Heart left ventricle (tissue), 16 donors: ENCODE measurements at regions of chr2 and their contacts with region 1.

Region 1: GRCh38 chr2:217785544-217786045 is 217.2 kb downstream of the TNS1 start:
- DNase-seq: peak; percentile 72 to 87 (median 79)
- ATAC-seq: peak; percentile 69 to 72 (median 71)
- H3K4me3 ChIP-seq: no peak overlapping the region
- H3K27ac ChIP-seq: peak overlapping the region in 1 of 12 donors; percentile 33
- H3K4me1 ChIP-seq: peaks cover 0 to 31% (median 21%) of the 10 kb centered on the region in 12 donors
- H3K27me3 ChIP-seq: no peaks in the 10 kb centered on the region
- CTCF ChIP-seq: peak; percentile 94 to 99 (median 96)
- POLR2A ChIP-seq: no peak

Region 2: GRCh38 chr2:217382794-217383193 is 402.8 kb before region 1 on chr2:
- intact Hi-C with region 1: no loop called
- DNase-seq: no peak
- ATAC-seq: peak; percentile 77 to 88 (median 84)
- H3K4me3 ChIP-seq: no peak overlapping the region
- H3K27ac ChIP-seq: peak overlapping the region in 10 of 12 donors; percentile 23 to 81 (median 65)
- H3K4me1 ChIP-seq: peaks cover 0 to 30% (median 5%) of the 10 kb centered on the region in 12 donors
- H3K27me3 ChIP-seq: no peaks in the 10 kb centered on the region
- CTCF ChIP-seq: no peak
- POLR2A ChIP-seq: no peak

Region 3: GRCh38 chr2:217835931-217836891 is 50.6 kb after region 1 on chr2:
- intact Hi-C with region 1: no loop called
- DNase-seq: peak; percentile 79 to 89 (median 88)
- ATAC-seq: peak; percentile 1 to 70 (median 48)
- H3K4me3 ChIP-seq: no peak overlapping the region
- H3K27ac ChIP-seq: peak overlapping the region; percentile 74 to 96 (median 88)
- H3K4me1 ChIP-seq: peaks cover 17 to 100% (median 91%) of the 10 kb centered on the region in 12 donors
- H3K27me3 ChIP-seq: no peaks in the 10 kb centered on the region
- CTCF ChIP-seq: no peak
- POLR2A ChIP-seq: no peak

Region 4: DNA sequence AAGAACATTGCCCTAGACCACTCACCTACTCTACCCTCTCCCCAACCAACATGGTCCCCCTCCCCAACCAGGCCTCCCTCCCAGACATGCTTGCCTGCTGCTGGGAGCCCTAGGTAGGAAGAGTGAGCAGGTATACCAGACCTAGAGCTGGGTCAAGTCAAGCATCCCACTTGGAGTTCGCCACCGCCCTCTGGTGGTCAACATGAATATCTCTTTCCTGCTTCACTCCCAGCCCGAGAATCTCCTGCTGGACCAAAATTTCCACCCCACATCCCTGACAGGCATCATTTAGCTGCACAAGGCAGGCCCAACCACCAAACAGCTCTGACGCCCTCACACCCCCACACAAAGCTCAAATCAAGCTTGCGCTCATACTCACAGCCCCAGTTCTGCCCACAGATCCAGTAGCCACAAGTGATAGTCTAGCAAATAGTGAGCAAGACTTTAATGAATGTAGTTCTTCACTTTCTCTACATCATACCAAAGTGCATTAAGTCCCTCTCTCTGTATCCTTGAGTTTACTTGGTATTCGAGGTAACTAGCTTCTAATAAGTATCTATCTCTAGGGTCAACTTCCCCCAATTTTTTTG is 101.2 kb after region 1 on chr2:
- intact Hi-C with region 1: loop called (anchors 1 to 5 kb)
- DNase-seq: peak; percentile 74 to 82 (median 79)
- ATAC-seq: peak in 3 of 4 donors; percentile 9 to 41 (median 33)
- H3K4me3 ChIP-seq: no peak overlapping the region
- H3K27ac ChIP-seq: peak overlapping the region in 9 of 12 donors; percentile 19 to 79 (median 65)
- H3K4me1 ChIP-seq: peaks cover 8 to 72% (median 52%) of the 10 kb centered on the region in 12 donors
- H3K27me3 ChIP-seq: no peaks in the 10 kb centered on the region
- CTCF ChIP-seq: peak; percentile 70 to 90 (median 79)
- POLR2A ChIP-seq: no peak

Region 5: GRCh38 chr2:217943446-217944389 is 158.1 kb after region 1 on chr2:
- intact Hi-C with region 1: loop called in 2 of 10 experiments (anchors 5 kb)
- DNase-seq: peak; percentile 91 to 94 (median 92)
- ATAC-seq: peak; percentile 87 to 90 (median 90)
- H3K4me3 ChIP-seq: peak overlapping the region; percentile 56 to 95 (median 82)
- H3K27ac ChIP-seq: peak overlapping the region; percentile 92 to 99 (median 96)
- H3K4me1 ChIP-seq: peaks cover 8 to 82% (median 65%) of the 10 kb centered on the region in 12 donors
- H3K27me3 ChIP-seq: no peaks in the 10 kb centered on the region
- CTCF ChIP-seq: peak; percentile 24 to 67 (median 52)
- POLR2A ChIP-seq: peak; percentile 64 to 96

Region 6: DNA sequence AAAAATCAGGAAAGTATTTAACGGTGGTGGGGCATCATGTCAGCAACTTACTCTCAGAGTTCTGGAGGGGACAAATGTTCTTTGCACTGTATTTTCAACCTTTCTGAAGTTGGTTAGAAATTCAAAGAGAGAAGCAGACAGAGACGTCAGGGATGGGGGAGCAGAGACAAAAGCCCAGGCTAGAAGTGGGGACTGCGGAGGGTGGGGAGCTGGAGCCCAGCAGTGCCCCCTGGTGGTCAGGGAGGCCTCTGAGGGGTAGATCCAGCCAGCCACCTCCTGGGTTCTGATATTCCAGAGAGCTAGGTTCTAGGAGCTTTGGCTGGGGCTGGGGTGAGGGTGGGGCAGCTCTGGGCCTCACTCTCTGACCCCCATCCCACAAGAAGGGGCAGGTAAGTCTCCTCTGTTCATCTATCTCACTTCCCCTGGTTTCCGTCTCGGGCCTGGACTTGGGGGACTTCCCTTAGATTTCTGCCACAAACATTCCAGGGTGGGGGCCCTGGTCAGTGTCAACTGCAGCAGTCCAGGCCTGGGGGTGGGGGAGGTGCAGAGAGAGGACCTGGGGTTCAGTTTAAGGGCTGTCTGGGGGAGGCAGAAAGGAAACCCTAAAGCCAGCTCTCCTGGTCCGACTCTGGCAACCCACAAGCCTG is 208.3 kb after region 1 on chr2:
- intact Hi-C with region 1: loop called in 6 of 10 experiments (anchors 1 to 2 kb)
- DNase-seq: peak in 4 of 5 donors; percentile 62 to 82 (median 71)
- ATAC-seq: peak; percentile 38 to 53 (median 44)
- H3K4me3 ChIP-seq: no peak overlapping the region
- H3K27ac ChIP-seq: peak overlapping the region in 3 of 12 donors; percentile 6 to 25 (median 10)
- H3K4me1 ChIP-seq: peaks cover 0 to 48% (median 25%) of the 10 kb centered on the region in 12 donors
- H3K27me3 ChIP-seq: no peaks in the 10 kb centered on the region
- CTCF ChIP-seq: peak; percentile 73 to 86 (median 80)
- POLR2A ChIP-seq: no peak

Region 7: DNA sequence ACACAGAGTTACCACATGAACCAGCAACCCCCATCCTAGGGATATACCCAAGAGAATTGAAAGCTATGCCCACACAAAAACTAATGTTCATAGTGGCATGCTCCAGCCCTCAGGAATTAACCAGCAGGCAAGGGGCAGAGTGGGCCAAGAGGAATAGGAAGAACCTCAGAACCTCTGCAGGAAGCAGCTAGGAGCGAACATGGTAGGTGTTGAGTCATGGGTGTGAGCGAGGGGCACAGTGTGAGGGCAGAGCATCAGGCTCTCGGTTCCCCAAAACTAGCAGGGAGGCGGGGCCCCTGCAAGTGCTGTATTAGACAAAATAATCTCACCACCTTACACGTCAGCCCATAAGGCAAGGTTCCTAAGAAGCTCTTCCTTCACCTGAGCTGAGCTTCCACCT is 277.9 kb after region 1 on chr2:
- intact Hi-C with region 1: loop called in 8 of 10 experiments (anchors 1 to 10 kb)
- DNase-seq: no peak
- ATAC-seq: peak in 1 of 4 donors; percentile 22
- H3K4me3 ChIP-seq: no peak overlapping the region
- H3K27ac ChIP-seq: no peak overlapping the region
- H3K4me1 ChIP-seq: peaks cover 0 to 14% (median 0%) of the 10 kb centered on the region in 12 donors
- H3K27me3 ChIP-seq: peaks cover 0 to 12% (median 0%) of the 10 kb centered on the region in 9 donors
- CTCF ChIP-seq: no peak
- POLR2A ChIP-seq: no peak